Heart left ventricle (tissue), 16 donors: ENCODE measurements at regions of chr2 and their contacts with region 1.

Region 1: GRCh38 chr2:33877348-33878016 is 278.4 kb upstream of the FAM98A start:
- DNase-seq: no peak
- ATAC-seq: peak; percentile 72 to 90 (median 82)
- H3K4me3 ChIP-seq: no peak overlapping the region
- H3K27ac ChIP-seq: peak overlapping the region in 7 of 12 donors; percentile 2 to 61 (median 24)
- H3K4me1 ChIP-seq: peaks cover 0 to 17% (median 4%) of the 10 kb centered on the region in 12 donors
- H3K27me3 ChIP-seq: no peaks in the 10 kb centered on the region
- CTCF ChIP-seq: no peak
- POLR2A ChIP-seq: no peak

Region 2: DNA sequence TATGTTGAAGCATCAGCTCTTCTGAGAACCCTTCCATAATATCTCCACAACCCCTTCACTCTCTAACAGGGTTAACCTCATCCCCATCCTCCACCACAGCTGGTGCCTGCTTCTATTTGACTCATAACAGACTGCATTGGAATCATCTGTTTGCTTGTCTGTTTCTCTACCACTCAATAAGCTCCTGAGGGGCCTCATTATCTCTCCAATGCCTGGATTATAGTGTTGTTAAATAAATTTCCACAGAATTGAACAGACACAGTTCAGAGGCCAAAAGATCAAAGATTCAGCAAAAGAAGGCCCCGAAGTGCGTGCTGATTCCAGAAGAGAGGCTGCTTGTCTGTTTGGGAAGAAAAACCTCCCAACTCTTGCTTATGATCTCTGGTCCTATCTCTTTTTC is 244.7 kb before region 1 on chr2:
- intact Hi-C with region 1: no loop called
- DNase-seq: no peak
- ATAC-seq: no peak
- H3K4me3 ChIP-seq: no peak overlapping the region
- H3K27ac ChIP-seq: no peak overlapping the region
- H3K4me1 ChIP-seq: no peaks in the 10 kb centered on the region
- H3K27me3 ChIP-seq: no peaks in the 10 kb centered on the region
- CTCF ChIP-seq: no peak
- POLR2A ChIP-seq: no peak

Region 3: DNA sequence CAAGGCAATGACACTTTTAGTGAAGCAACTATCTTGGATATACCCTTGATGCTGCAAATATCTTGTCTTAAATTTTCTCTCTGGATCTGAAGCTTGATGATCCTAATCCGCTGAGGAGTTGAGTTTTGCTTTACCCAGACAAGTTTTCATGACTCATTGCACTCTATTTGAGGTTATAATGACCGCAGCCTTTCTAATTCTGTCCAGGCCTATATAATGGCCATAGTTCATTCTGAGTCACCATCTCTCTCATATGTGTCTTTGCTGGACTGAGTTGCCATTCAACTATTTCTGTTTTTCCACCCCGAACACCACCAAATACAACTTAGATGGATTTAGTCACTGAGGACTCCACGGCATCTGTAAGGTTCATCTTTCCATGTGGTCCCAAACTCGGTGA is 523.7 kb after region 1 on chr2:
- intact Hi-C with region 1: loop called in 1 of 10 experiments (anchors 5 kb)
- DNase-seq: no peak
- ATAC-seq: no peak
- H3K4me3 ChIP-seq: no peak overlapping the region
- H3K27ac ChIP-seq: no peak overlapping the region
- H3K4me1 ChIP-seq: no peaks in the 10 kb centered on the region
- H3K27me3 ChIP-seq: no peaks in the 10 kb centered on the region
- CTCF ChIP-seq: no peak
- POLR2A ChIP-seq: no peak